H1 (cell line): ENCODE measurements at regions of chr14 and their contacts with region 1.

Region 1: GRCh38 chr14:34322940-34323418 is 139.1 kb downstream of the SPTSSA start:
- DNase-seq: peak in 1 of 2 experiments; percentile 79
- H3K4me3 ChIP-seq: no peak overlapping the region
- H3K27ac ChIP-seq: no peak overlapping the region
- H3K4me1 ChIP-seq: no peaks in the 10 kb centered on the region
- H3K27me3 ChIP-seq: no peaks in the 10 kb centered on the region
- CTCF ChIP-seq: peak; percentile 56 to 74 (median 58)
- EP300 ChIP-seq: no peak
- POLR2A ChIP-seq: no peak
- RAD21 ChIP-seq: peak; percentile 33 to 47; a peak in 3 of 4 replicates

Region 2: GRCh38 chr14:34300882-34301734 is 21.9 kb before region 1 on chr14:
- CTCF ChIA-PET with region 1: interaction called, 45 read pairs
- POLR2A ChIA-PET with region 1: no interaction called
- DNase-seq: no peak
- H3K4me3 ChIP-seq: no peak overlapping the region
- H3K27ac ChIP-seq: no peak overlapping the region
- H3K4me1 ChIP-seq: peaks cover 0 to 3% (median 0%) of the 10 kb centered on the region in 4 experiments; a peak in 1 of 7 replicates
- H3K27me3 ChIP-seq: no peaks in the 10 kb centered on the region
- CTCF ChIP-seq: peak in 2 of 3 experiments; percentile 56 to 70; a peak in 2 of 4 replicates
- EP300 ChIP-seq: no peak
- POLR2A ChIP-seq: no peak
- RAD21 ChIP-seq: peak; percentile 83 to 85

Region 3: DNA sequence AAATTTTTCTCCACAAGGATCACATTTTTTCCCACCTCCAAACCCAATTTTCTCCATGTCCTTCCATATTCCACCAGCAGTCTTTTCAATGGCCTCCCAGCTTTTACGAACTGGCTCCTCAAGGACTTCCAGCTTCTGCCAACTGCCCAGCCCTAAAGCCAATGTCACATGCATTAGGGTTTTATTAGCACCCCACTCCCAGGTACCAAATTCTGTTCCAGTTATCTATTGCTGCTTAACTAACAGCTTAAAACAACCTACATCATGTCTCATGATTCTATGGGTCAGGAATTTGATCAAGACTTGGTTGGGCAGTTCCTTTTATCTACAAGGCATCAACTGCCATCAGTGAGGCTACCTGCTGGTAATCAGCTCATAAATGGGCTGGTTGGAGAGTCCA is 12.3 kb before region 1 on chr14:
- CTCF ChIA-PET with region 1: interaction called, 45 read pairs
- POLR2A ChIA-PET with region 1: no interaction called
- DNase-seq: no peak
- H3K4me3 ChIP-seq: no peak overlapping the region
- H3K27ac ChIP-seq: no peak overlapping the region
- H3K4me1 ChIP-seq: no peaks in the 10 kb centered on the region
- H3K27me3 ChIP-seq: no peaks in the 10 kb centered on the region
- CTCF ChIP-seq: no peak
- EP300 ChIP-seq: no peak
- POLR2A ChIP-seq: no peak
- RAD21 ChIP-seq: no peak

Region 4: GRCh38 chr14:34582117-34582680 is 259.2 kb after region 1 on chr14:
- CTCF ChIA-PET with region 1: no interaction called
- POLR2A ChIA-PET with region 1: no interaction called
- DNase-seq: no peak
- H3K4me3 ChIP-seq: no peak overlapping the region
- H3K27ac ChIP-seq: no peak overlapping the region
- H3K4me1 ChIP-seq: no peaks in the 10 kb centered on the region
- H3K27me3 ChIP-seq: no peaks in the 10 kb centered on the region
- CTCF ChIP-seq: no peak
- EP300 ChIP-seq: no peak
- POLR2A ChIP-seq: no peak
- RAD21 ChIP-seq: no peak